A549 (cell line): ENCODE measurements at regions of chr18 and their contacts with region 1.

Region 1: DNA sequence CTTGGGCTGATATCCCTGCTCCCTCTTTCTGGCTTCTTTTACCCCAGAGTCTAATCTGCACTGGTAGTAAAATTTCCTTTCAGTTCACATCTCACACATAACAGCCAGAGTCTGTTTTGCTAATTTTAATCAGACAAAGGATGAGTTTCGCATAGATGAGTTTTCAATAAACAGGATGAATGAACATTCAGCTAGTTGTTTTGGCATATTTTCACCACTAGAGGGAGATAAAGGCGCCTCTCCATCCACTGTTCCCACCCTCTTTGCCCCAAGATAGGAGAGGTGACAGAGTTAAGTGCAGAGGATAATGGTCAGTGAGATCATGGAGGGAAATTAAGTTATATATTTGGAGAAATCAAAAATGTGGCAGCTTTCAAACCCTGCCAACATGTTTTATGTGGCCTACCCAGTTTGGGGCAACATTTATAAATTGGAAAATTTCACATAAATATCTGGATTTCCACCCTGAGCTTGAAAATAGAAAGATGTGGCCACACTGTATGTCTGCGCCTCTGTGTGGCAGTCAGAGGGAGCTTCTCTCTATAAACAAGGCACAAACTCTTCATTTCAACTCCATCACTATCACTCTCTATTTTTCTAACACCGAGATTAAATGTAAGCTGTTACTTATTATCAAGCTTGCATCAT is 48.5 kb upstream of the DTNA start:
- DNase-seq: peak; percentile 25 to 29
- ATAC-seq: peak; percentile 74 to 81
- H3K4me3 ChIP-seq: no peak overlapping the region
- H3K27ac ChIP-seq: no peak overlapping the region
- H3K4me1 ChIP-seq: peaks cover 4% of the 10 kb centered on the region; the same call in 2 of the 3 replicates
- CTCF ChIP-seq: peak; percentile 60
- EP300 ChIP-seq: no peak
- POLR2A ChIP-seq: no peak
- RAD21 ChIP-seq: peak; percentile 46 to 50

Region 2: GRCh38 chr18:34647251-34647650 is 14.3 kb before region 1 on chr18:
- CTCF ChIA-PET with region 1: interaction called, 15 read pairs
- POLR2A ChIA-PET with region 1: no interaction called
- DNase-seq: peak; percentile 0 to 39
- ATAC-seq: peak; percentile 54 to 76; a peak in 4 of 6 replicates
- H3K4me3 ChIP-seq: no peak overlapping the region
- H3K27ac ChIP-seq: no peak overlapping the region
- H3K4me1 ChIP-seq: no peaks in the 10 kb centered on the region
- CTCF ChIP-seq: no peak
- EP300 ChIP-seq: no peak
- POLR2A ChIP-seq: no peak
- RAD21 ChIP-seq: no peak

Region 3: GRCh38 chr18:34779112-34779511 is 117.5 kb after region 1 on chr18:
- CTCF ChIA-PET with region 1: interaction called, 48 read pairs
- POLR2A ChIA-PET with region 1: no interaction called
- DNase-seq: no peak
- ATAC-seq: no peak
- H3K4me3 ChIP-seq: no peak overlapping the region
- H3K27ac ChIP-seq: no peak overlapping the region
- H3K4me1 ChIP-seq: no peaks in the 10 kb centered on the region
- CTCF ChIP-seq: no peak
- EP300 ChIP-seq: no peak
- POLR2A ChIP-seq: no peak
- RAD21 ChIP-seq: no peak

Region 4: DNA sequence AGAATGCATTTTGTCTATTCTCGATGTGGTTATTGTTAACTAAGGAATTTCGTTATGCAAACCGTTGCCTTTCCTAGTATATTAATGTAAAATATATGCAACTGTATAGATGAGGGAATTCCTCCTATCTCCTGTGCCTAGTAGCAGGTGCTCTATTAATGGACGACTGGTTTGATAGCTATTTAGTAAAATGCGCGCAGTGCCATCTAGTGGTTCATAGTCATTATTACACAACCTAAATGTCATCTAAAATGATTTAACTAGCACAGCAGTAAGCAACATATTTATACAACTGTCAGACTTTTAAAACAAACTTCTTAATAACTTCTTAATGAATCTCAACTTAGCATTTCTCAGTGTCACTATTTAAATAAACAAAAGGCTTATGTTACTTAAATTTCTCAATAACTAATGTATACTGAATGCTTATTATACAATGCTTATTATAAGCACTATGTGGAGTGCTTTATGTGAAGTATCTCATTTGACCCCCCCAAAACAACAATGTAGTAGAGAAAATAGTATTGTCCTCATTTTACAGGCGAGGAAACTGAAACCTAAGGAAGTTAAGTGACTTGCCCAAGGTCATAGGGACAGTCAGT is 126.4 kb after region 1 on chr18:
- CTCF ChIA-PET with region 1: interaction called, 48 read pairs
- POLR2A ChIA-PET with region 1: no interaction called
- DNase-seq: peak; percentile 25 to 56
- ATAC-seq: peak; percentile 61 to 62; a peak in 3 of 6 replicates
- H3K4me3 ChIP-seq: no peak overlapping the region
- H3K27ac ChIP-seq: no peak overlapping the region
- H3K4me1 ChIP-seq: no peaks in the 10 kb centered on the region
- CTCF ChIP-seq: peak; percentile 73
- EP300 ChIP-seq: no peak
- POLR2A ChIP-seq: no peak
- RAD21 ChIP-seq: peak; percentile 74 to 75

Region 5: GRCh38 chr18:34809451-34810072 is 148.0 kb after region 1 on chr18:
- CTCF ChIA-PET with region 1: no interaction called
- POLR2A ChIA-PET with region 1: no interaction called
- DNase-seq: peak in 1 of 2 experiments; percentile 39
- ATAC-seq: no peak
- H3K4me3 ChIP-seq: no peak overlapping the region
- H3K27ac ChIP-seq: no peak overlapping the region
- H3K4me1 ChIP-seq: no peaks in the 10 kb centered on the region
- CTCF ChIP-seq: no peak
- EP300 ChIP-seq: no peak
- POLR2A ChIP-seq: no peak
- RAD21 ChIP-seq: no peak